Activated CD4-positive, alpha-beta memory T cell treated with anti-CD3 and anti-CD28 coated beads for 36 hours (primary cell): ENCODE measurements at regions of chr7 and their contacts with region 1.

Region 1: GRCh38 chr7:24907311-24907886 is 72.6 kb downstream of the OSBPL3 start:
- DNase-seq: peak; percentile 56
- H3K4me3 Mint-ChIP-seq: no peak overlapping the region
- H3K27ac Mint-ChIP-seq: no peak overlapping the region
- H3K4me1 Mint-ChIP-seq: peaks cover 42% of the 10 kb centered on the region
- H3K27me3 Mint-ChIP-seq: no peaks in the 10 kb centered on the region

Region 2: DNA sequence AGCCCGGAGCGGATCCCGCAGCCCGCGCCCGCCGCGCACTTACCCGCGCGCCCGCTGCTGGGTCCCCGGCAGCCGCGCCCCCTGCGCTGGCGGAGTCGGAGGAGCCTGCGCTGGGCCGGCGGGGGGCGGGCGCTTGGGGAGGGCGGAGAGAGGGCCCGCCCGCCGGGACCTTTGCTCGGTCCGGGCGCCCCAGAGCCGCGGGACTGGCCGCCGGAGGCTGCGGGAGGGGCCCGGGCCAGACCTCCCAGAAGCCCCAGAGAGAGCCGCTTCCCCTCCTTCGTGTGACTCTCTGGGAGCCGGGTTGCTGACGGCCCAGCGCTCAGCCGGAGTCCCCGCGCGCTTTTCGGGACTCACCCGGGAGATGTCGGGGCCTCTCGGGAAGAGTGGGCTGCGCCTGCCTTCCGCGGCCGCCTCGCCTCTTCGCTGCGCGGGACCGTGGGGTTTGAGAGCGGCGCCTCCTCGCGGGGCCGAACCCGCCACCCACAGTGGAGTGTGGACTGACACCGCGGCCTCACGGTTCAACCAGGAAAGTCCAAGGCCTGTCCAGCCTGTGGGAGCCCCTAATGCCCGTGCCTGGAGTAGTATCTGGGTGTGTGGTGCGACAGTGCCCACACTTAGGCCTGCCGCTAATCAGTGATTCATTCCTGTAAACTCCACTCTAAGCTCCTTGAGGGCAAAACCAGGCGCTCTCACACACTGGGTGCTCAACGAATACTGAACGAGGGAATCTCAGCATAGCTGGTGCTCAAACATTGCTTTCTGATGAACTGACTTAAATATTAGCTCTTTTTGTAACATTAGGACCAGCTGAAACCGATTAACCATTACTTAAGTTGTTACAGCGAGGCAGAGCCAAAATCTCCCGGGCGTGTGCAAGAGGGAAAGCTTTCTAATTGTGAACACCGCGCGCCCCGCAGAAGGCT is 149.8 kb before region 1 on chr7 and contains the start of gene GSDME:
- CTCF ChIA-PET with region 1: interaction called, 3 read pairs
- POLR2A ChIA-PET with region 1: no interaction called
- intact Hi-C with region 1: loop called (anchors 5 kb)
- DNase-seq: peak; percentile 35
- H3K4me3 Mint-ChIP-seq: peak within 1 kb of the TSS; percentile 78
- H3K27ac Mint-ChIP-seq: no peak within 1 kb of the TSS
- H3K4me1 Mint-ChIP-seq: peaks cover 30% of the 10 kb centered on the region
- H3K27me3 Mint-ChIP-seq: peaks cover 45% of the 10 kb centered on the region
- total RNA-seq, gene GSDME: 4.7 TPM

Region 3: GRCh38 chr7:24869572-24869971 is 37.8 kb before region 1 on chr7:
- CTCF ChIA-PET with region 1: no interaction called
- POLR2A ChIA-PET with region 1: interaction called, 4 read pairs
- intact Hi-C with region 1: loop called (anchors 1 kb)
- DNase-seq: no peak
- H3K4me3 Mint-ChIP-seq: no peak overlapping the region
- H3K27ac Mint-ChIP-seq: no peak overlapping the region
- H3K4me1 Mint-ChIP-seq: peaks cover 39% of the 10 kb centered on the region
- H3K27me3 Mint-ChIP-seq: no peaks in the 10 kb centered on the region

Region 4: DNA sequence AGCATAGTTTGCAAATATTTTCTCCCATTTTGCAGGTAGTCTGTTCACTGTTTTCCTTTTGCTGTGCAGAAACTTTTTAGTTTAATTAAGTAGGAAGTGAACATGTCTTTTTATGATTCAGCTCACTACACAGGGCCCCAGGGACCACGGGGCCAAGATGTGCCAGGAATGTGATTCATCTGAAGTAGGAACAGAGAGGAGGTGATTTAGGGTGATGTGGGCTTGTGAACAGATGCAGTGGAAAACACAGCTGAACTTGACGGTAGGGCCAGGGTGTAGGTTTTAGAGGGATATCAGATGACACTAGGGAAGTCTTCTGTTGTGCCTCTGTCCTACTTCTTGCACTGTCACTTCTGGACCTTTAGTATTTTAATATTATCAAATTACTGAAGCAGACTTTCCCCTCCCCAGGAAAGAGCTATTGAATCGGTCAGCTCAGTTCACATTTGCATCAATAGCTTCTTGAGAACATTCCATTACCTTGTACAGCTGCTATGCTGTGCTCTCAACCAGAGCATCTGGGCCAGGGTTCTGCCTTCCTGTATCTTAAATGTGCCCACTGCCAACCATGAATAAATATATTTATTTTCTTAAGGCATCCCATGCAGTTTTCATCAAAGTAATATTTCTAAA is 24.3 kb before region 1 on chr7:
- CTCF ChIA-PET with region 1: no interaction called
- POLR2A ChIA-PET with region 1: interaction called, 5 read pairs
- intact Hi-C with region 1: loop called (anchors 1 kb)
- DNase-seq: peak; percentile 75
- H3K4me3 Mint-ChIP-seq: no peak overlapping the region
- H3K27ac Mint-ChIP-seq: peak overlapping the region; percentile 57
- H3K4me1 Mint-ChIP-seq: peaks cover 78% of the 10 kb centered on the region
- H3K27me3 Mint-ChIP-seq: no peaks in the 10 kb centered on the region

Region 5: DNA sequence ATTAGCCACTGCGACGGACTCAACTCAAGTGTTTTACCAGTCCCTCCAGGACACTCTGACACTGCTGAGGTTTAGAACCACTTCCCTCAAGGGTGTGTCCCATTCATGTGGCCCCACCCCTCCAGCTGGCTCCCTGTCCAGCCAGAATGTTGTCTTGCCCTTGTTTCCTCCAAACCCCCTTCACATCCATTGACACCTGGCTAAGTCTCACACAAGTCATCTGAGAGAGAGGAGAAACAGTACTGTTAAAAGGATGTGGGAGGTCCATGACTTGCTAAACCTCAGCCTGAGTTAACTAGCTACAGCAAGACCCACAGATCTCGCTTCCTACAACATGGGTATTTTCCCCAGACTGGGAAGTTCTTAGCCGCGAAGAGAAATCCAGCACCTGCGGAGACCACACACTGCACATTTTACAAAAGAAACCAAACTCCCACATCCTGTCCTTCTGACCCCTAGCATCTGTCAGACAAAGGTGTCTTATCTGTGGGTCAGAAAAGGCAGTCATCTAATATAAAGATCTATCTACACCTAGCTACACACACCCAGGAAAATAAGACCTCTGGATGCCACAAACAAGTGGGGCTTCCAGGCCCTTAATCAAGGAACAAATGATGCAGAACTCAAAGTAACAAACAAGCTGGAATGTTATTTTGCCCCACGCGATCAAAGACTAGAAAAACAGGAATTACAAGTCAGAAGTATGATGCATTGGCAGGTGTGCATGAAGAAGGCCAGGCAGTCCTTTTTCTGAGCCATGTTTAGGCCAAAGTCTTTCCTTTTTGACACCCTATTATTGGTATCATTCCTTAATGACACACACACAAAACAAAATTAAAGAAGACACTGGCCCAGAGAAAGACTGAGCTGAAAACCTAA is 58.7 kb after region 1 on chr7:
- CTCF ChIA-PET with region 1: interaction called, 3 read pairs
- POLR2A ChIA-PET with region 1: interaction called, 5 read pairs
- intact Hi-C with region 1: loop called (anchors 1 kb)
- DNase-seq: peak; percentile 61
- H3K4me3 Mint-ChIP-seq: peak overlapping the region; percentile 36
- H3K27ac Mint-ChIP-seq: peak overlapping the region; percentile 80
- H3K4me1 Mint-ChIP-seq: peaks cover 82% of the 10 kb centered on the region
- H3K27me3 Mint-ChIP-seq: no peaks in the 10 kb centered on the region

Region 6: GRCh38 chr7:25036366-25036765 is 129.0 kb after region 1 on chr7:
- CTCF ChIA-PET with region 1: no interaction called
- POLR2A ChIA-PET with region 1: no interaction called
- intact Hi-C with region 1: no loop called
- DNase-seq: no peak
- H3K4me3 Mint-ChIP-seq: no peak overlapping the region
- H3K27ac Mint-ChIP-seq: no peak overlapping the region
- H3K4me1 Mint-ChIP-seq: peaks cover 5% of the 10 kb centered on the region
- H3K27me3 Mint-ChIP-seq: no peaks in the 10 kb centered on the region

Region 7: GRCh38 chr7:25069900-25070443 is 162.6 kb after region 1 on chr7:
- CTCF ChIA-PET with region 1: interaction called, 3 read pairs
- POLR2A ChIA-PET with region 1: no interaction called
- intact Hi-C with region 1: loop called (anchors 5 kb)
- DNase-seq: peak; percentile 45
- H3K4me3 Mint-ChIP-seq: no peak overlapping the region
- H3K27ac Mint-ChIP-seq: no peak overlapping the region
- H3K4me1 Mint-ChIP-seq: peaks cover 26% of the 10 kb centered on the region
- H3K27me3 Mint-ChIP-seq: no peaks in the 10 kb centered on the region